ENCODE measurements at regions of chr22 and their contacts with region 1.

Region 1: DNA sequence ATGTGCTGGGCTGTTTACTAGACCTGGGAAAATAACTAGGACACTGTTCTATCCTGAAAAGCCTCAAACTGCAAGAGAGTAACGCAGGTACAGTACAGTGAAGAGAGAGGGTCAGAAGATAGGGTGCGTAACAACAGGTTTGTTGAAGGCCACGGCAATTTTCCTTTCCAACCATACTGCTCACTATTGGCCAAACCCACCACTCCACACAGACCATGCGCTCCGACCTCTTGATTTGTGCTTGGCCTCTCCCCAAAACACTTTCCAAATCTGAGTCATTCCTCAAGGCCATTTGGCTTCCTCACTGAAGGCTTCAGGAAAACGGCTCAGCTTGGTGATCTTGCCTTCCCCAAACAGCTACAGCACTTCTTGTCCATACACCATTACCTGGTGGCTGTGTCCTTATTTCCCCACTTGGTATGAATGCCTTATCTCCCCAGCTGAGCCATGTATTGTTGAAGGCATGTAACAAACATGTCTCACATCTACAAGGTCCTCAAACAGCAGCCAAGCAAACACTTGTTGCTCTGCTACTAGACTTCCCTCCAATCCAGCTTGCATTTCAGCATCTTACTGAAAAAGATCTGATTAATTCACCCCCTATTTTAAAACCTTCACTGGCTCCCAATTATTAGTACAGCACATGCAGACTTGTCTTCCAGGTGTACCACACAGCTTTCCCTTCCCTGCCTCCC is 40.9 kb downstream of the TCF20 start:
- DNase-seq: peak; percentile 2
- H3K4me3 ChIP-seq: no peak overlapping the region
- H3K27ac ChIP-seq: no peak overlapping the region
- H3K4me1 ChIP-seq: peaks cover 10% of the 10 kb centered on the region
- H3K27me3 ChIP-seq: no peaks in the 10 kb centered on the region
- CTCF ChIP-seq: no peak

Region 2: GRCh38 chr22:42247596-42247995 is 18.0 kb after region 1 on chr22:
- CTCF ChIA-PET with region 1: no interaction called
- dilution Hi-C with region 1: no loop called
- in situ Hi-C with region 1: no loop called
- intact Hi-C with region 1: loop called (anchors 2 kb)
- DNase-seq: no peak
- H3K4me3 ChIP-seq: no peak overlapping the region
- H3K27ac ChIP-seq: no peak overlapping the region
- H3K4me1 ChIP-seq: peaks cover 3% of the 10 kb centered on the region
- H3K27me3 ChIP-seq: no peaks in the 10 kb centered on the region
- CTCF ChIP-seq: no peak

Region 3: DNA sequence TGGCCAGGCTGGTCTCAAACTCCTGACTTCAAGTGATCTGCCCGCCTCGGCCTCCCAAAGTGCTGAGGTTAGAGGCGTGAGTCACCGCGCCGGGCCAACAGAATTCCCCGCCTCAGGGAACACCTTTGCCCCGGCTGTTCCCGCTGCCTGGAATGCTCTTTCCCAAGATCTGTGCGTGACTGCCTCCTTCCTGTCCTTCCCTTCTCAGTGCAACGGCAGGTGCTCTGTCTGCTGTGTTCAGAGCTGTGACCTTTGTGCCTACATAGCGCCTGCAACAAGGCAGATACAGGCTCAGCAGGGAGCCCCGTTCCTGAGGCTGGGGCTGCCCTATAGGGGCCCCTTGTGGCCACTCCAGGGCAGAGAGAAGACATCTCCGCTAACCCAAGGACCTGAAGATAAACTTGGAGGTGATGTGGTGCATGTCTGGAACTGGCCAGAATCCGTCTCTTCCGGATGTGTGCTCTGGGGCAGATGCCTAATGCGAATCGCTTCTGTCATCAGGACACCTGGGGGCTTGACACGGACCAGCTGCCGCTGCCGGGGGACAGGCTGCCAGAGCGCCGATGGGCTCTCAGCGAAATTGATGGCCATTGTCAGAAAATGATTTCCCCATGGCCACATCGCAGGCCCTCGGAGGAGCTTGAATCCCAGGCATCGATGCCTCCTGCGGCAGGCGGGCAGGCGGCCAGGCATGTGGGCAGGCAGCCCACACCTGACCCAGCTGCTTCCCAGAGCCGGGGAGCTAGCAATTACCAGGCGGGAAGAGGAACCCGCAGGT is 84.4 kb after region 1 on chr22:
- CTCF ChIA-PET with region 1: no interaction called
- dilution Hi-C with region 1: no loop called
- in situ Hi-C with region 1: no loop called
- intact Hi-C with region 1: no loop called
- DNase-seq: peak; percentile 84
- H3K4me3 ChIP-seq: no peak overlapping the region
- H3K27ac ChIP-seq: peak overlapping the region; percentile 6
- H3K4me1 ChIP-seq: peaks cover 54% of the 10 kb centered on the region
- H3K27me3 ChIP-seq: no peaks in the 10 kb centered on the region
- CTCF ChIP-seq: peak; percentile 45 to 68